ENCODE measurements at regions of chr19 and their contacts with region 1.

Region 1: DNA sequence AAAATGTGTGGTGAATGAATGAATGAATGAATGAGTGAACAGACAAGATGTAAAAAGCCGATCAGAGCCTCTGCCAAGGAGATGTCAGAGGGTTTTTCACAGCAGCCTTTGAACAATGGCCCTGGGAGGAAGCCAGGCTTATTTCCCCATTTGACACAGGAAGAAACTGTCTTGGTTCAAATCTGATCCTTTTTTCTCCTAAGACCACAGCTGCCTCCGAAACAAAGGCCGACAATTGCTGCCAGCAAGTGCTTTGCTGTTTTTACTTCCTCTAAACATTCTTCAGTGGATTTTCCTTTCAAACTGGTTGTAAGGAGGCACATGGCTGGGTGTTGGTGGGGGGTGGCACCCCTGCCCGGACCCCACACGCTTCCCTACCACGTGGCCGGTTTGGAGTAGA is 44.2 kb upstream of the HOMER3 start:
- DNase-seq: peak; percentile 70 to 83 (median 75)
- H3K4me3 ChIP-seq: peak overlapping the region in 1 of 3 experiments; percentile 16
- H3K4me3 Mint-ChIP-seq: peak overlapping the region; percentile 39 to 43
- H3K27ac ChIP-seq: peak overlapping the region; percentile 77 to 82
- H3K27ac Mint-ChIP-seq: peak overlapping the region; percentile 85 to 96 (median 93)
- H3K4me1 ChIP-seq: peaks cover 32 to 37% of the 10 kb centered on the region in 2 donors
- H3K4me1 Mint-ChIP-seq: peaks cover 35% of the 10 kb centered on the region
- H3K27me3 ChIP-seq: no peaks in the 10 kb centered on the region
- H3K27me3 Mint-ChIP-seq: peaks cover 0 to 3% (median 0%) of the 10 kb centered on the region in 3 donors
- CTCF ChIP-seq: no peak

Region 2: DNA sequence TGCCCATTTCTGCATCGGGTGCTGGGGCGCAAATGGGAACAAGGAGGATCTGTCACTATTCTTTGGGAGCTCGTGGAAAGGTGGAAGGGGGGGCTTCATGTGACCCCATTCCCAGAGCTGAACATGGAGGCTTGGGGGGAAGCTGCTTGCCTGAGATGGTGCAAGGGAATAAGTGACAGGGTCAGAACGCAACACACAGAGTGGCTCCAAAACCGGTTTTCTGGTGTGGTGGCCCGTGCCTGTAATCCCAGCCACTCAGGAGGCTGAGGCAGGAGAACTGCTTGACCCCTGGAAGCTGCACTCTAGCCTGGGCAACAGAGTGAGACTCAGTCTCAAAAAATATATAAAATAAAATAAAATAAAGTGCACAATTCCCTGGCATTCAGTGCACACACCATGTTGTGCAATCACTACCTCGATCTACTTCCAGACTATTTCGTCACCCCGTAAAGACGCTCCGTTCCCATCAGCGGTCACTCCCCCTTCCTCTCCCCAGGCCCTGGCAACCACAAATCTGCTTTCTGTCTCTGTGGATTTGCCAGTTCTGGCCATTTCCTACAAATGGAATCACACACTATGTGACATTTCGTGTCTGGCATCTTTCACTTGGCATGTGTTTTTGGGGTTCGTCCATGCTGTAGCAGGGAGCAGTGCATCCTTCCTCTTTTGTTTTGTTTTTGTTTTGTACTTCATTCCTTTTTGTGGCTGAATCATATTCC is 175.9 kb before region 1 on chr19:
- intact Hi-C with region 1: no loop called
- DNase-seq: peak; percentile 42 to 56 (median 53)
- H3K4me3 ChIP-seq: peak overlapping the region; percentile 18 to 66 (median 31)
- H3K4me3 Mint-ChIP-seq: peak overlapping the region; percentile 69 to 87
- H3K27ac ChIP-seq: no peak overlapping the region
- H3K27ac Mint-ChIP-seq: peak overlapping the region in 2 of 7 donors; percentile 7 to 56
- H3K4me1 ChIP-seq: peaks cover 10% of the 10 kb centered on the region in 2 donors
- H3K4me1 Mint-ChIP-seq: peaks cover 12% of the 10 kb centered on the region
- H3K27me3 ChIP-seq: peaks cover 0 to 4% of the 10 kb centered on the region in 2 donors
- H3K27me3 Mint-ChIP-seq: peaks cover 9 to 38% (median 31%) of the 10 kb centered on the region in 3 donors
- CTCF ChIP-seq: no peak

Region 3: GRCh38 chr19:18831524-18832305 is 153.5 kb before region 1 on chr19 and contains the start of gene UPF1:
- intact Hi-C with region 1: no loop called
- DNase-seq: peak; percentile 91 to 93 (median 92)
- H3K4me3 ChIP-seq: peak within 1 kb of the TSS; percentile 75 to 90 (median 89)
- H3K4me3 Mint-ChIP-seq: peak within 1 kb of the TSS; percentile 97 to 99
- H3K27ac ChIP-seq: peak within 1 kb of the TSS; percentile 49 to 79
- H3K27ac Mint-ChIP-seq: peak within 1 kb of the TSS; percentile 87 to 95 (median 91)
- H3K4me1 ChIP-seq: peaks cover 24 to 39% of the 10 kb centered on the region in 2 donors
- H3K4me1 Mint-ChIP-seq: peaks cover 43% of the 10 kb centered on the region
- H3K27me3 ChIP-seq: no peaks in the 10 kb centered on the region
- H3K27me3 Mint-ChIP-seq: peaks cover 16 to 24% (median 19%) of the 10 kb centered on the region in 3 donors
- CTCF ChIP-seq: no peak
- polyA plus RNA-seq, gene UPF1: 2.6 to 43.7 (median 3.2) TPM

Region 4: DNA sequence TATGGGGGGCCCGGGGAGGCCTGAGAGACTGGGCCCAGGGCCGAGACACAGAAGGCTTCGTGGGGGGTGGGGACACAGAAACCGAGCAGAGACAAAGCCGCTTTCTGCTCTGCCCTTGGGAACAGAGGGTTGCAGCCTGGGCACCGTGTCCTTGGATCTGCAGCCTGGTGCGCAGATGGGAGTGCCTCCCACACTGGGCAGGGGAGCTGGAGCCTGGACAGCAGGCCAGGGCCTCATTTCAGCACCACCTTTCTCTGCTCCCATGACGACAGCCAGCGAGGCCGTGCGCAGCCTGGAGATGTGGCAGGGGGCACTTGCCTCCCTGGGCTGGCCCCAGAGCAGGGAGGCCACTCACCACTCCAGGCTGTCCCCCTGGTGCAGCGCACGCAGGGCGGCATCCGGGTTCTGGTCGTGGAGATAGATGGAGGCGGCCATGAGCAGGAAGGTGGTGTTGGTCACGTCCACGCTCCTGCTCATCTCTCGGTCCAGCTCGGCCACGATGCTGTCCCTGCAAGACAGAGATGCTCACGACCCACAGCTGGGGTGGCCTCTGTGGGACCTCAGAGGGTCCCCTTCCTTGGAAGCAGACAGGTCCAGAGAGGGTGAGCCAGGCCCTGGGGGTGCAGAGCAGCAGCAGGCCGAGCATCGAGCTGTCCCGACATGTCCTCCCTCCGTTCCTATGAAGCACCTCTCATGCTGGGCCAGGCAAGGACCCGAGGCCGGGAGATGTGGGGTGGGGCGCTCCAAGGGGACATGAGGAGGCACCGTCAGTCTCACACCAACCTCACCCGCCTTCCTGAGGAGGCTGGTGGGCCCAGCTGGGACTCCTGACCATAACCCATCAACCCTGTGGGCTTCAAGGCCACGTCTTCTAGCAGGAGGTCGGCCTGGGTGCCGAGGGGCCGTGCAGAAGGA is 78.4 kb before region 1 on chr19:
- intact Hi-C with region 1: no loop called
- DNase-seq: no peak
- H3K4me3 ChIP-seq: no peak overlapping the region
- H3K4me3 Mint-ChIP-seq: no peak overlapping the region
- H3K27ac ChIP-seq: no peak overlapping the region
- H3K27ac Mint-ChIP-seq: no peak overlapping the region
- H3K4me1 ChIP-seq: no peaks in the 10 kb centered on the region
- H3K4me1 Mint-ChIP-seq: no peaks in the 10 kb centered on the region
- H3K27me3 ChIP-seq: no peaks in the 10 kb centered on the region
- H3K27me3 Mint-ChIP-seq: no peaks in the 10 kb centered on the region
- CTCF ChIP-seq: no peak

Region 5: GRCh38 chr19:18932216-18932841 is 52.9 kb before region 1 on chr19:
- intact Hi-C with region 1: loop called in 1 of 2 experiments (anchors 2 kb)
- DNase-seq: peak; percentile 82 to 90 (median 90)
- H3K4me3 ChIP-seq: peak overlapping the region; percentile 26 to 77 (median 31)
- H3K4me3 Mint-ChIP-seq: peak overlapping the region; percentile 85 to 94
- H3K27ac ChIP-seq: peak overlapping the region in 1 of 2 donors; percentile 59
- H3K27ac Mint-ChIP-seq: peak overlapping the region; percentile 81 to 96 (median 91)
- H3K4me1 ChIP-seq: peaks cover 11 to 15% of the 10 kb centered on the region in 2 donors
- H3K4me1 Mint-ChIP-seq: peaks cover 16% of the 10 kb centered on the region
- H3K27me3 ChIP-seq: no peaks in the 10 kb centered on the region
- H3K27me3 Mint-ChIP-seq: peaks cover 0 to 1% (median 0%) of the 10 kb centered on the region in 3 donors
- CTCF ChIP-seq: no peak

Region 6: GRCh38 chr19:18940769-18941407 is 44.4 kb before region 1 on chr19 and contains the start of gene HOMER3:
- intact Hi-C with region 1: loop called (anchors 2 to 5 kb)
- DNase-seq: peak; percentile 49 to 70 (median 66)
- H3K4me3 ChIP-seq: peak within 1 kb of the TSS; percentile 70 to 91 (median 90)
- H3K4me3 Mint-ChIP-seq: peak within 1 kb of the TSS; percentile 90 to 95
- H3K27ac ChIP-seq: peak within 1 kb of the TSS; percentile 53 to 88
- H3K27ac Mint-ChIP-seq: peak within 1 kb of the TSS; percentile 77 to 97 (median 89)
- H3K4me1 ChIP-seq: peaks cover 21 to 28% of the 10 kb centered on the region in 2 donors
- H3K4me1 Mint-ChIP-seq: peaks cover 38% of the 10 kb centered on the region
- H3K27me3 ChIP-seq: no peaks in the 10 kb centered on the region
- H3K27me3 Mint-ChIP-seq: peaks cover 0 to 1% (median 0%) of the 10 kb centered on the region in 3 donors
- CTCF ChIP-seq: no peak
- polyA plus RNA-seq, gene HOMER3: 45.1 to 88.1 (median 49.4) TPM

Region 7: GRCh38 chr19:18967358-18968146 is 17.7 kb before region 1 on chr19:
- intact Hi-C with region 1: loop called in 1 of 2 experiments (anchors 2 kb)
- DNase-seq: peak; percentile 83 to 94 (median 93)
- H3K4me3 ChIP-seq: peak overlapping the region in 1 of 3 experiments; percentile 54
- H3K4me3 Mint-ChIP-seq: peak overlapping the region; percentile 16 to 84
- H3K27ac ChIP-seq: peak overlapping the region; percentile 93 to 97
- H3K27ac Mint-ChIP-seq: peak overlapping the region; percentile 97 to 99 (median 98)
- H3K4me1 ChIP-seq: peaks cover 65 to 70% of the 10 kb centered on the region in 2 donors
- H3K4me1 Mint-ChIP-seq: peaks cover 53% of the 10 kb centered on the region
- H3K27me3 ChIP-seq: no peaks in the 10 kb centered on the region
- H3K27me3 Mint-ChIP-seq: peaks cover 0 to 1% (median 1%) of the 10 kb centered on the region in 3 donors
- CTCF ChIP-seq: no peak

Measured in CD14-positive monocyte (primary cell).